Posterior vena cava (tissue), 2 donors: ENCODE measurements at regions of chr4 and their contacts with region 1.

Region 1: GRCh38 chr4:52861879-52862616 is at the start of gene RASL11B:
- DNase-seq: peak; percentile 94
- total RNA-seq, gene RASL11B: 8.9 to 26.8 TPM

Region 2: DNA sequence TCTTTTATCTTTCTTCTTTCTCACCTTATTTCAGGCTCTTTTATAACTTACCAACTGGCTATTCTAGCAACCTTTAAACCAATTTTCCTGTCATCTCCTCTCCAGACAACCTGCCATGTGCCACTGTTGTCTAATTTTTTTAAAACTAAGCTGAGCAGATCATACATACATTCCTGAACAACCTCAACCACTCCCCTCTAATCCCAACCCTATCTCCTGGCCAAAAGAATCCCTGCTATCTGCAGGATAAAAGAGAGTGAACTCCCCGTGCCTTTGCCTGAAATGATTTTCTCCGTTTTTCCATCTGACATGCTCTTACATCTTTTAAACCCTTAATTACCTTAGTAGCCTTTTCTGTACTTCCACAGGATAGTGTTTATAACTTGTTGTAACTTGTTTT is 983.6 kb before region 1 on chr4:
- intact Hi-C with region 1: loop called in 1 of 2 experiments (anchors 5 kb)
- DNase-seq: no peak

Region 3: DNA sequence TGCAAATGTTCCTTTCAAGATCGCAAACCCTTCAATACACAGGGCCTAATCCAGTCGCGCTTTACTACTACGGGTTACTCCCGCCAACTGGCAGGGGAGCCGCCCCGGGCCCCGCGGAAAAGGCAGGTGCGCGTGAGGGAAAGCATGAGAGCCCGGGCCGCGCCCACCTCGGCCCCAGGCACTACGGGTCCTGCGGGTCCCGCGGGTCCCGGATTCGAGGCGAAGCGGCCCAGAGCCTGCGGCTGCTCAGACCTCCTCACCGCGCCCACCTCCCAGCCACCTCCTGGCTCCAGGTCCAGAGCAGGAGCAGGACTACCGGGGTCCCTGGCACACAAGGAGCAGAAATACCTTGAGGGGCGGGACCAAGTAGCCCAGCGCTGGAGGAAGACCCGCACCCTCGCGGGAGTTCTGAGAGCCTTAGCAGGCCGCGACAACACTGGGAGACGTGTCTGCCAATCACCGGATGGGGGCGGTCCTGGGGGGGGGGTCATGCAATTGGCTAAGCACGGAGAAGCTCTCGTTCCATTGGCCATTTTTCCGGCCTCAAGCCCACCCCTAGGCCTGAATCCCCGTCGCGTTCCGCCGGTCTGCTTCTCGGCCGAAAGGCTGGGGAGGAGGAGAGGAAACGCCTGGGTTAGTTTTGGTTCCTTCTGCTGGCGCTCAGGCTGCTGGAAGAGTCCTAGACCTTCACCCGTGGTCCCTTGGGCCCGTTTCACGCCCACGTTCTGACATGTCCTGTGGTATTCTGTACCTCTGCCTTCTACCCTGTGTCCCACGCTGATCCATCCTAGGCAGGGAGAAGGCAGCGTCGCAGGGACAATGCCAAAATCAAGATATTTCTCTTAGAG is 139.9 kb before region 1 on chr4:
- intact Hi-C with region 1: loop called in 1 of 2 experiments (anchors 10 kb)
- DNase-seq: peak; percentile 97